Activated naive CD8-positive, alpha-beta T cell treated with anti-CD3 and anti-CD28 coated beads, Interleukin-2, amount 10 ng/mL, durations not matched to agents 7 days and 5 days (primary cell): ENCODE measurements at regions of chr6 and their contacts with region 1.

Region 1: GRCh38 chr6:53348371-53349208 is at the start of gene ELOVL5:
- DNase-seq: peak; percentile 94
- ATAC-seq: peak; percentile 81
- H3K4me3 Mint-ChIP-seq: peak within 1 kb of the TSS; percentile 95
- H3K27ac Mint-ChIP-seq: peak within 1 kb of the TSS; percentile 94
- H3K4me1 Mint-ChIP-seq: peaks cover 34% of the 10 kb centered on the region
- H3K27me3 Mint-ChIP-seq: peaks cover 7% of the 10 kb centered on the region
- total RNA-seq, gene ELOVL5: 101 to 110 TPM

Region 2: DNA sequence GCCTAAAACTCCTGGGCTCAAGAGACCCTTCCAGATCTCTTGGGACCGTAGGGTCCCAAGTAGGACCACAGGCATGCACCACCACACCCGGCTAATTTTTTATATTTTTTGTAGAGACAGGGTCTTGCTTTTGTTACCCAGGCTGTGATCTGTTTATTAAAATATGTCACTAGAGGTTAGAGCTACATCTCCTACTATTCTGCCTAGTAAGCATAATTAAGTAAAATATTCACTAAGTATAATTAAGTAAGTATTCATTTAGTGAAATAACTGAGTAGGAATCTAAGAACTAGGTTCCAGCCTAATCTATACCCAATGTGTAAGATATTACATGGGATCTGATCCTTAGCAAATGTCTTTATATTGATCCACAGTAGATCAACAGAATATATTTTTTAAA is 159.8 kb before region 1 on chr6:
- POLR2A ChIA-PET with region 1: interaction called, 10 read pairs
- DNase-seq: no peak
- ATAC-seq: no peak
- H3K4me3 Mint-ChIP-seq: peak overlapping the region; percentile 89
- H3K27ac Mint-ChIP-seq: peak overlapping the region; percentile 98
- H3K4me1 Mint-ChIP-seq: peaks cover 14% of the 10 kb centered on the region
- H3K27me3 Mint-ChIP-seq: no peaks in the 10 kb centered on the region

Region 3: GRCh38 chr6:53300656-53301551 is 47.7 kb before region 1 on chr6:
- POLR2A ChIA-PET with region 1: interaction called, 20 read pairs
- DNase-seq: no peak
- ATAC-seq: peak; percentile 16
- H3K4me3 Mint-ChIP-seq: peak overlapping the region; percentile 18
- H3K27ac Mint-ChIP-seq: peak overlapping the region; percentile 5
- H3K4me1 Mint-ChIP-seq: peaks cover 44% of the 10 kb centered on the region
- H3K27me3 Mint-ChIP-seq: no peaks in the 10 kb centered on the region

Region 4: GRCh38 chr6:53335208-53335994 is 13.2 kb before region 1 on chr6:
- POLR2A ChIA-PET with region 1: interaction called, 39 read pairs
- DNase-seq: peak; percentile 62
- ATAC-seq: peak; percentile 80
- H3K4me3 Mint-ChIP-seq: peak overlapping the region; percentile 83
- H3K27ac Mint-ChIP-seq: peak overlapping the region; percentile 93
- H3K4me1 Mint-ChIP-seq: peaks cover 59% of the 10 kb centered on the region
- H3K27me3 Mint-ChIP-seq: no peaks in the 10 kb centered on the region

Region 5: DNA sequence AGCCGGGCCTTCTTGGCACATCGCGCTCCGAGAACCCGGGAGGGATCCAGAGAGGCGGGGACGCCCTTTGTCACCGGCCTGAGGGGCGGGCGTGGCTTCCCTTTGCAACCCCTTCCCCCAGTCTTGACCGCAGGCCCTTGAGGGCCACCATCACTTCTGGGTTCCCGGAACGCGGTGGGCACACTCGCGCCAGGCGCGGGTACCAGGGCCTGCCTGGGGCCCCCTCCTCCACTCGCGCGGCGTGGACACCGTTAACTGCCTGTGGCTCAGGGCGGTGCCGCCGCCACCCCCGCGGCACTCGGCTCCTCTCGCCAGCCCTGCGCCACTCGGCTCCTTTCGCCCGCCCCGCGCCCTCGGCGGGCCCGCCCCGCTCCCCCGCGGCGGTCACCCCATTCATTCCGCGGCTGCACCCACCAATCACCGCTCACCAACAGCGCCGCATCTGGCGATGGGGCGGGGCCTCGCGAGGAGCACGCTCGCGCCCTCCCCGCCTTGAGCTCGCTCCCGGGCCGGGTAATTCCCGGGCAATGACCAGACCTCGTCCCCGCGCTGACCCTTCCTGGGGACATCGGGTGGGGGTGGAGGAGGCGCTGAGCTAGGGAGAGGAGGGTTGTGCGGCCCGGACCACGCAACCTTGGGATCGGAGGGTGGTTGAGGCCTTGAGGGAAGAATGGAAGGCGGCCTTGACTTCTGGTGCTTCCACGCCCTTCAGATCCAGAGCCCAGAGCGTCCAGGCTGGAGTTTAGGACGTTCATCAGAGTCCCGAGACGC is 10.7 kb after region 1 on chr6:
- POLR2A ChIA-PET with region 1: interaction called, 71 read pairs
- DNase-seq: peak; percentile 95
- ATAC-seq: peak; percentile 96
- H3K4me3 Mint-ChIP-seq: peak overlapping the region; percentile 91
- H3K27ac Mint-ChIP-seq: peak overlapping the region; percentile 98
- H3K4me1 Mint-ChIP-seq: peaks cover 30% of the 10 kb centered on the region
- H3K27me3 Mint-ChIP-seq: peaks cover 3% of the 10 kb centered on the region